Dorsolateral prefrontal cortex (tissue), 120 donors: ENCODE measurements at regions of chr7 and their contacts with region 1.

Region 1: GRCh38 chr7:104643587-104644217 is 315.3 kb downstream of the LHFPL3 start:
- DNase-seq: no peak
- H3K4me3 ChIP-seq: no peak overlapping the region
- H3K27ac ChIP-seq: no peak overlapping the region
- H3K27me3 ChIP-seq: peaks cover 0 to 8% (median 0%) of the 10 kb centered on the region in 45 donors
- CTCF ChIP-seq: peak in 34 of 56 donors; percentile 8 to 56 (median 26)

Region 2: DNA sequence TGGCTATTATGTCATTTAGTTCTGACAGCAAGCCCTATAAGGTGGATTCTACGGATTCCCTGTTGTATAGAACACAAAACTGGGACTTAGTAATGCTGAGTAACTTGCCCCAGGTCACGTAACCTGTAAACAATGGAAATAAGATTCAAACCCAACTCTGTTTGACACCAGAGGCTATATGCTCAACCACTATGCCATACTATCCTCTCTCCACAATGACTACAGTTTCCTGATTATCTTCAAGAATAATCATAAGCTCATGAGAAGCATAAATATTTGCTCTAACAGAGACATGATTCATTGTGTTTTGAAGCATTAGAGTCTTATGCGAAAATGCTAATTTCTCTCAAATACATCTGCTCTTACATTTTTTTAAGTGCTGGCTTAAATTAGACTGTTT is 74.0 kb before region 1 on chr7:
- intact Hi-C with region 1: loop called in 1 of 2 experiments (anchors 10 kb)
- DNase-seq: no peak
- H3K4me3 ChIP-seq: no peak overlapping the region
- H3K27ac ChIP-seq: no peak overlapping the region
- H3K27me3 ChIP-seq: peaks cover 0 to 13% (median 0%) of the 10 kb centered on the region in 45 donors
- CTCF ChIP-seq: no peak